ENCODE measurements at regions of chr15 and their contacts with region 1.

Region 1: GRCh38 chr15:86725628-86726027 is 646.0 kb downstream of the AGBL1 start:
- DNase-seq: no peak
- ATAC-seq: peak in 1 of 4 donors; percentile 50
- H3K4me3 ChIP-seq: no peak overlapping the region
- H3K27ac ChIP-seq: no peak overlapping the region
- H3K4me1 ChIP-seq: no peaks in the 10 kb centered on the region
- H3K27me3 ChIP-seq: no peaks in the 10 kb centered on the region
- CTCF ChIP-seq: no peak

Region 2: GRCh38 chr15:86300390-86301125 is 425.1 kb before region 1 on chr15:
- intact Hi-C with region 1: no loop called
- DNase-seq: no peak
- ATAC-seq: no peak
- H3K4me3 ChIP-seq: no peak overlapping the region
- H3K27ac ChIP-seq: no peak overlapping the region
- H3K4me1 ChIP-seq: no peaks in the 10 kb centered on the region
- H3K27me3 ChIP-seq: peaks cover 0 to 2% (median 0%) of the 10 kb centered on the region in 3 donors
- CTCF ChIP-seq: no peak

Region 3: GRCh38 chr15:86776145-86776544 is 50.5 kb after region 1 on chr15:
- intact Hi-C with region 1: loop called in 1 of 2 experiments (anchors 10 kb)
- DNase-seq: no peak
- ATAC-seq: no peak
- H3K4me3 ChIP-seq: no peak overlapping the region
- H3K27ac ChIP-seq: no peak overlapping the region
- H3K4me1 ChIP-seq: no peaks in the 10 kb centered on the region
- H3K27me3 ChIP-seq: no peaks in the 10 kb centered on the region
- CTCF ChIP-seq: no peak

Region 4: DNA sequence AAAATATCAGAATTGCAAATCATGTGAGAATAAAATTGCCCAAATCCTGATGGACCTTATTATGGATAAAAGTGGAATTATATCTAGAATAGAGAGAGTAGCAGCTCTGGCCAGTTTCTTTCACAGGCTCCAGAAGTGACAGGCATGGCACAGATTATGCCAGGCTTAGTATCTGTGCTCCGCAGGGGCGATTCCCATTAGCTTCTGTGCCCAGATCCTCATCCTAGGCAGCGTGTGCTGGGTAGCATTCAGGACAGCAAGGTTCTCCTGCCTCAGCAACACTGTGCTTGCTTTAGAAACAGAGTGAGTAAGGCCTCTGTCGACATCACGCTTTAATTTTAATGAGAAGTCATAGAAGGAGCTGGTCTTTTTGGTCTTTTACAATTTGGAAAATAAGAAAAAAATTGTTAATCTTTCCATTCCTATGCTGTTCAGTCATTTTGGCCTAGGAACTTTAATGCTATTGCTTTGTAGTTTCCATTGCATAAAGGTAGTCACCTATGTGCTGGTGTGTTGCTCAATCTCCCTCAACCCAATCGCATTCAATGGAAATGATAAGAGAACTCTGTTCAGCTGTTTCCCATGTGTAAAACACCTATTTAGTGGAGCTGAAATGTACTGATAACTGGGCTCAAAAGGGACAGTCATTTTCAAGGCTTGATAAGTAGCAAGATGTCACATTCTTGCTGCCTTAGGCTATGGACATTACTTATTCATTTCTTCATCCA is 124.1 kb after region 1 on chr15:
- intact Hi-C with region 1: no loop called
- DNase-seq: no peak
- ATAC-seq: no peak
- H3K4me3 ChIP-seq: no peak overlapping the region
- H3K27ac ChIP-seq: no peak overlapping the region
- H3K4me1 ChIP-seq: peaks cover 22% of the 10 kb centered on the region
- H3K27me3 ChIP-seq: no peaks in the 10 kb centered on the region
- CTCF ChIP-seq: no peak

Region 5: GRCh38 chr15:86932456-86932855 is 206.8 kb after region 1 on chr15:
- intact Hi-C with region 1: no loop called
- DNase-seq: no peak
- ATAC-seq: no peak
- H3K4me3 ChIP-seq: no peak overlapping the region
- H3K27ac ChIP-seq: no peak overlapping the region
- H3K4me1 ChIP-seq: no peaks in the 10 kb centered on the region
- H3K27me3 ChIP-seq: no peaks in the 10 kb centered on the region
- CTCF ChIP-seq: no peak